A549 (cell line): ENCODE measurements at regions of chr2 and their contacts with region 1.

Region 1: GRCh38 chr2:227095346-227095745 is 68.7 kb downstream of the COL4A4 start:
- DNase-seq: no peak
- ATAC-seq: no peak
- H3K4me3 ChIP-seq: no peak overlapping the region
- H3K27ac ChIP-seq: no peak overlapping the region
- H3K4me1 ChIP-seq: no peaks in the 10 kb centered on the region
- CTCF ChIP-seq: no peak
- EP300 ChIP-seq: no peak
- POLR2A ChIP-seq: no peak
- RAD21 ChIP-seq: no peak

Region 2: DNA sequence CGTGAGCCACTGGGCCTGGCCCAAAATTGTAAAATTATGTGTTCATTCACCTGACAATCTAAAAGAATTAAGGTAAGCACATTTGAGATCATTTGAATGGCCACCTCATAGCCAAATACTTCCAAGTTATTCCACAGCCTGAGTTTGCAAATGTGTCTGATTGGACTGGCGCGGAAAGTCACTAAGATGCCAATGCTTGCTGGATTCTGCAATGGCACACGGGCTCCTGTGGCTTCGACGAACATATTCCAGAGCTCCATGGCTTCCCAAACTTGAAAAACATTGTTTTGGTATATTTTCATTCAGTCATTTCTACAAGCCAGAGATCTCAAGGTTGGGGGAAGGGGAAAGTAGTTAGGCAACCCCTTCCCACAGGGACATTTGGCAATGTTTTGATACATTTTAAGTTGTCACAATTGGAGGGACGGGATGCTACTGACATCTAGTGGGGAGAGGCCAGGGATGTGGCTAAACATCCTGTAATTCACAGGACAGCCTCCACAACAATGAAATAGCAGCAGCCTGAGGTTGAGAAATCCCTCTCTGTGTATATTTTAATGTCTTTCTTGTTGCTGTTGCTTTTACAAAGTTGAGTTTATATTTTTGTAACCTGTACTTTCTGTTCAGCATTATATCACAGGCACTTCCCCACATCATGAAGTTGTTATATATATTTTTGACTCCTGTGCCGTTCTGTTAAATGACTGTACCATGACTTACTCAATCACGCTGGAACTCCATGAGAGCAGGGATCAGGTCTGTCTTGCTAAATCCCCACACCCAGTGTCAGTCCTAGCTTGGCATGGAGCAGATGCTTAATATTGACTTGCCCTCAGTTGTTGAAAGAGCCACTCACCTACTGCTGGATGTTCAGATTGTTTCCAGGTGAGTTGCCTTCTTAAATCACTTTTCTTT is 11.8 kb after region 1 on chr2:
- CTCF ChIA-PET with region 1: interaction called, 10 read pairs
- POLR2A ChIA-PET with region 1: no interaction called
- DNase-seq: peak; percentile 42 to 73
- ATAC-seq: peak; percentile 99
- H3K4me3 ChIP-seq: no peak overlapping the region
- H3K27ac ChIP-seq: no peak overlapping the region
- H3K4me1 ChIP-seq: no peaks in the 10 kb centered on the region
- CTCF ChIP-seq: peak; percentile 89
- EP300 ChIP-seq: no peak
- POLR2A ChIP-seq: no peak
- RAD21 ChIP-seq: peak; percentile 91 to 97

Region 3: DNA sequence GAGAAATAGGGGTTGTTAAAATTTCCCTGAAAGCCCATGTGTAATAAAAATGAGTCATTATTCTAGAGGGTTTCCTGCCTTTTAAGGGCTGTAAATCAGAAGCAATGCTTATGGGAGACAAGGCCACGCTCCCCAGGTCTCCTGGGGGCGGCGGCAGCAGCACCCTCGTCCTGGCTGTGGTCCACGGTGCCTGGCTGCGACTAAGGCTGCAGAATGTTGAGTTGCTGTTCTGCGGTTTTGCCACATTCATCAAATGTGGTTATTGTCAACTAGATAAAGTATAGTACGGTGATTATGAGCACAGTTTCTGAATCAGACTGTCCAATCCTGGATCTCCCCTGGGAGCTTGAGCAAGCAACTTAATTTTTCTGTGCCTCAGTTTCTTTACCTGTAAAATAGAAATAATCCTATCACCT is 364.7 kb after region 1 on chr2:
- CTCF ChIA-PET with region 1: no interaction called
- POLR2A ChIA-PET with region 1: no interaction called
- DNase-seq: no peak
- ATAC-seq: peak in 1 of 2 experiments; percentile 33; a peak in 2 of 6 replicates
- H3K4me3 ChIP-seq: no peak overlapping the region
- H3K27ac ChIP-seq: peak overlapping the region; percentile 23 to 79; a peak in 5 of 6 replicates
- H3K4me1 ChIP-seq: peaks cover 71% of the 10 kb centered on the region
- CTCF ChIP-seq: no peak
- EP300 ChIP-seq: no peak
- POLR2A ChIP-seq: no peak
- RAD21 ChIP-seq: no peak